GM12878 (cell line): ENCODE measurements at regions of chr22 and their contacts with region 1.

Region 1: DNA sequence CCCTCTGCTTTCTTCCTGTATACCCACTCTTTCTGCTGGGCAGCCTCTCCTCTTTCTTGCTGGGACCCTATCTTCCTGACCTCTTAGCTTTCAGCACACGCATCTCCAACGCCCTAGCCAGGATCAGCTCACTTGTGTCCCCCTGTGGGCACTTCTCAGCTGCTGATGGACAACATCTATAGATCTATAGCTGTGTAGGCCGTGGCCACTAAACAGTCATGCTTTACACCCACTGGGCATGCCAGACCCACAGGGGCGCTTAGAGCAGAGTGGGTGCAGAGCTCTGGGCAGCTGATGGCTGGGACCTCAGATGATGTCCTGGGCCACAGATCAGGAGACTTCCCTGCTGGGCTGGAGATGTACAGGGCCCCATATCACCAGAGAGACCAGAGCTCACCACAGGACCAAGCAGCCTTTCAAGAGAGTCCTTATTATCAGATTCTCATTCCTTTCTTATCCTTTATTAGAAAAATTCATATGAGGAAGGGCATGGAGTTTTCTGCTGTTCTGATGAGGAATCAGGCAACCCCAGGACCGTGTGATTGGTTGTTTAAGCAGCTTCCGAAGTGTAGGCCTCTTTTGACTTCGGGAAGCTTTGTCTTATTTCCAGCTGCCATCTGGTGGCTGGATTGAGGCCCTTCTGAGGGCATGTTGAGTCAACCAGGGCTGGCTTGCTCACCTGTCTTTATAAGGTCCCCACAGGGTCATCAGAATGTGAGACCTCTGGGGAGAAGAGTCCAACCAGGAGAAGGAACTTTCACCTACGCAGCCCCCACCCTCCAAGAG is 60.5 kb downstream of the OSBP2 start:
- DNase-seq: no peak
- ATAC-seq: peak; percentile 98
- H3K4me3 ChIP-seq: no peak overlapping the region
- H3K27ac ChIP-seq: no peak overlapping the region
- H3K4me1 ChIP-seq: no peaks in the 10 kb centered on the region
- H3K27me3 ChIP-seq: no peaks in the 10 kb centered on the region
- CTCF ChIP-seq: peak; percentile 76 to 88 (median 81)
- EP300 ChIP-seq: no peak
- POLR2A ChIP-seq: no peak
- RAD21 ChIP-seq: peak; percentile 98

Region 2: DNA sequence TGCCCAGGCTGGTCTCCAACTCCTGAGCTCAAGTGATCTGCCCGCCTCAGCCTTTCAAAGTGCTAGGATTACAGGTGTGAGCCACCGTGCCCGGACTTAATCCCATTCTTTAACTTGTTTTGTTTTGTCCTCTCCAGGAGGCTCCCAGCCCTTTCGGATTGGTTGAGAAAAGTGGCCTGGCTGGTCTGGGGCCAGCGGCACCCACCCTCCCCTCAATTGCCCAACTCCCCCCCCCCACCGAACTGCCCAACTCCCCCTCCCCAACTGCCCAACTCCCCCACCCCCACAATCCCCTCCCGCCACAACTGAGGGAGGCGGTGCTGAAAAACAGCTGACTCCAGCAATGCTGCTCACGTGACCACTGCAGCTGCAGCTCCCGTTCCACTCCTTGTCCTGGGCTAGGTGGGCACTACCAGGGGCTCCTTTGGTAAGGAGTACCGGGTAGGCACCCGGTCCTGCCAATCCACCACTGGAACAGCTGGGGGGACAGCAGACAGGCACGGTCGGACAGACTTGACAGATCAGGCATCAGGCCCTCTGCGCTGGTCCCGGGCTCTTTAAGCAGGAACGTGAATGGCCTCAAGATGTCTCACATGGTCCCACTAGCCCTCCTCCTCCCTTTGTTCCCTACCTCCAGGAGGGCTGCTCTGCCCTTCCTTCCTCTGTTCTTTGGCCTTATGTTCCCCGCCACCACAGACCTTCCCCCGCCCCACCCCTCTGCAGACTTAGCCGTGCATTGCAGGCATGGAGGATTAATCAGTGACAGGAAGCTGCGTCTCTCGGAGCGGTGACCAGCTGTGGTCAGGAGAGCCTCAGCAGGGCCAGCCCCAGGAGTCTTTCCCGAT is 148.5 kb before region 1 on chr22 and contains the start of gene TCN2:
- CTCF ChIA-PET with region 1: interaction called, 37 read pairs
- POLR2A ChIA-PET with region 1: no interaction called
- RAD21 ChIA-PET with region 1: interaction called, 21 read pairs
- SMC1A ChIA-PET with region 1: interaction called, 18 read pairs
- in situ Hi-C with region 1: no loop called
- intact Hi-C with region 1: loop called (anchors 1 kb)
- DNase-seq: no peak
- ATAC-seq: peak; percentile 79
- H3K4me3 ChIP-seq: peak within 1 kb of the TSS; percentile 66
- H3K27ac ChIP-seq: peak within 1 kb of the TSS; percentile 54
- H3K4me1 ChIP-seq: peaks cover 51% of the 10 kb centered on the region
- H3K27me3 ChIP-seq: no peaks in the 10 kb centered on the region
- CTCF ChIP-seq: 0 out of 6 replicates have a peak, but pooled peaks of 1 of the 3 experiments have one; percentile 12
- EP300 ChIP-seq: no peak
- POLR2A ChIP-seq: peak; percentile 62; the same call in 1 of the 2 replicates
- RAD21 ChIP-seq: no peak
- polyA plus RNA-seq, gene TCN2: 15.9 to 21.8 TPM

Region 3: GRCh38 chr22:30680991-30681770 is 74.0 kb before region 1 on chr22:
- CTCF ChIA-PET with region 1: interaction called, 12 read pairs
- POLR2A ChIA-PET with region 1: no interaction called
- RAD21 ChIA-PET with region 1: interaction called, 10 read pairs
- SMC1A ChIA-PET with region 1: interaction called, 7 read pairs
- in situ Hi-C with region 1: no loop called
- intact Hi-C with region 1: no loop called
- DNase-seq: no peak
- ATAC-seq: no peak
- H3K4me3 ChIP-seq: no peak overlapping the region
- H3K27ac ChIP-seq: no peak overlapping the region
- H3K4me1 ChIP-seq: no peaks in the 10 kb centered on the region
- H3K27me3 ChIP-seq: no peaks in the 10 kb centered on the region
- CTCF ChIP-seq: no peak
- EP300 ChIP-seq: no peak
- POLR2A ChIP-seq: no peak
- RAD21 ChIP-seq: no peak

Region 4: DNA sequence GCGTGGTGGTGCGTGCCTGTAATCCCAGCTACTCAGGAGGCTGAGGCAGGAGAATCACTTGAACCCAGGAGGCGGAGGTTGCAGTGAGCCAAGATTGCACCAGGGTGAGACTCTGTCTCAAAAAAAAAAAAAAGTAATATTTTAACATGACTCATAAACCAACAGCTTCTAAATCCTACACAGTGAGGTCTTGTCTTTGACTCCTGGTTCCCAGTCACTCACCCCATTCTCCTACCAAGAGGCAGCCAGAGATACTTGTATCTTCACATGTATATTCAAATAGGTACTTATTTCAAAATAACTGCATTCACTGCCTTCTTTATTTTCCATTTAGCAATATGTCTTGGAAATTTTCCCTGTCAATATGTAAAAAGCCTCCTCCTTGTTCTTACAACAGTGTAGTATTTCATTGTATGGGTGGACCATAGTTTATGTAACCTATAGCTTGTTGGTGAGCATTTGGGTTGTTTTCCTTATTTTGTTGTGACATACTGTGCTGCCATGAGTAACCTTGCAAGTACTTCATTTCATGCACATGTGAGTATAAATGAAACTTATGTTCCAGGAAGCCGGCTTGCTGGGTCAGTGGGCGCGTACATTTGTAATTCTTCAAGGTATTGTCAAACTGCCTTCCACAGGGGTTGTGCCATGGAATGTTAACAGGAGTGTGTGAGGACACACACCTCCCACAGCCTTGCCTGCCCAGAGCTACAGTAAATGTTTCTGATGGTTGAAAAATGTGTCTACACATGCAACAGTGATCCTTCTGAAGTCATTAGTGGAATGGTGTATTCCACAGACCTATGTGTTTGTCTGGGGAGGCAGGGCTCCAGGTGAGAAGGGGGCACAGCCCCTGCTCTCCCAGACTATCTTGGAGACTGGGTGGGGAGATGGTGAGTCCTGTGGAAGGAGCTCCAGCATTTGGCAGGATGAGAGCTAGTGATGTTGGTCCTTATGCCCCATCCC is 12.6 kb before region 1 on chr22:
- CTCF ChIA-PET with region 1: interaction called, 57 read pairs
- POLR2A ChIA-PET with region 1: interaction called, 3 read pairs
- RAD21 ChIA-PET with region 1: interaction called, 13 read pairs
- SMC1A ChIA-PET with region 1: interaction called, 27 read pairs
- in situ Hi-C with region 1: no loop called
- intact Hi-C with region 1: no loop called
- DNase-seq: no peak
- ATAC-seq: peak; percentile 7; the same call in 1 of the 3 replicates
- H3K4me3 ChIP-seq: no peak overlapping the region; the same call in 1 of the 2 replicates
- H3K27ac ChIP-seq: no peak overlapping the region; the same call in 1 of the 2 replicates
- H3K4me1 ChIP-seq: peaks cover 52% of the 10 kb centered on the region
- H3K27me3 ChIP-seq: no peaks in the 10 kb centered on the region
- CTCF ChIP-seq: no peak
- EP300 ChIP-seq: no peak
- POLR2A ChIP-seq: no peak
- RAD21 ChIP-seq: no peak

Region 5: DNA sequence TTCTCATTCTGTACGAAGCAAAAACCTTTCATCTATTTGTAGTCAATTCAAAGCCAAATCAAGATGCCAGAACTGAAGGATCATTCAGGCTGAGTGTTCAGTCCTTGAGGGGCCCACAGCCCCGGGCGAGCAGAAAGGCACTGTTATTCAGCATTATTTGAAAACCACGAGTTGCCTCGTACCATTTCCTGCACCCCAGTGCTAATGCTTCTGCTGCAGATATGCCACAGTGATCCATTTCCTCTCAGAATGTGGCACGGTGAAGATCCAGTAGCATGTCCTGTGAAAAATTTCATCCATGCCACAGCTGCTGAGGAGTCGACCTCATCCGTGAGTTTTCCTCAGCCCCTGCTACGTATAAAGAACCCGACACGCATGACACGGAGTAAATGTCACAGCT is 24.9 kb after region 1 on chr22:
- CTCF ChIA-PET with region 1: no interaction called
- POLR2A ChIA-PET with region 1: no interaction called
- RAD21 ChIA-PET with region 1: no interaction called
- SMC1A ChIA-PET with region 1: no interaction called
- in situ Hi-C with region 1: no loop called
- intact Hi-C with region 1: no loop called
- DNase-seq: no peak
- ATAC-seq: no peak
- H3K4me3 ChIP-seq: no peak overlapping the region
- H3K27ac ChIP-seq: no peak overlapping the region
- H3K4me1 ChIP-seq: no peaks in the 10 kb centered on the region
- H3K27me3 ChIP-seq: no peaks in the 10 kb centered on the region
- CTCF ChIP-seq: no peak
- EP300 ChIP-seq: no peak
- POLR2A ChIP-seq: no peak
- RAD21 ChIP-seq: no peak

Region 6: GRCh38 chr22:30822216-30823014 is 67.3 kb after region 1 on chr22:
- CTCF ChIA-PET with region 1: no interaction called
- POLR2A ChIA-PET with region 1: no interaction called
- RAD21 ChIA-PET with region 1: no interaction called
- SMC1A ChIA-PET with region 1: no interaction called
- in situ Hi-C with region 1: no loop called
- intact Hi-C with region 1: no loop called
- DNase-seq: no peak
- ATAC-seq: peak; percentile 55
- H3K4me3 ChIP-seq: no peak overlapping the region
- H3K27ac ChIP-seq: no peak overlapping the region
- H3K4me1 ChIP-seq: no peaks in the 10 kb centered on the region
- H3K27me3 ChIP-seq: peaks cover 9 to 10% of the 10 kb centered on the region in 2 experiments
- CTCF ChIP-seq: no peak
- EP300 ChIP-seq: no peak
- POLR2A ChIP-seq: no peak
- RAD21 ChIP-seq: no peak